Brain microvascular endothelial cell (primary cell): ENCODE measurements at regions of chr1 and their contacts with region 1.

Region 1: GRCh38 chr1:17606826-17607440 is 67.4 kb downstream of the ARHGEF10L start:
- DNase-seq: peak; percentile 47
- H3K4me3 ChIP-seq: no peak overlapping the region
- H3K27ac ChIP-seq: no peak overlapping the region
- H3K27me3 ChIP-seq: no peaks in the 10 kb centered on the region
- CTCF ChIP-seq: peak; percentile 96

Region 2: GRCh38 chr1:17494114-17494729 is 112.7 kb before region 1 on chr1:
- in situ Hi-C with region 1: loop called (anchors 10 kb)
- DNase-seq: peak; percentile 52
- H3K4me3 ChIP-seq: no peak overlapping the region
- H3K27ac ChIP-seq: no peak overlapping the region
- H3K27me3 ChIP-seq: no peaks in the 10 kb centered on the region
- CTCF ChIP-seq: peak; percentile 97

Region 3: DNA sequence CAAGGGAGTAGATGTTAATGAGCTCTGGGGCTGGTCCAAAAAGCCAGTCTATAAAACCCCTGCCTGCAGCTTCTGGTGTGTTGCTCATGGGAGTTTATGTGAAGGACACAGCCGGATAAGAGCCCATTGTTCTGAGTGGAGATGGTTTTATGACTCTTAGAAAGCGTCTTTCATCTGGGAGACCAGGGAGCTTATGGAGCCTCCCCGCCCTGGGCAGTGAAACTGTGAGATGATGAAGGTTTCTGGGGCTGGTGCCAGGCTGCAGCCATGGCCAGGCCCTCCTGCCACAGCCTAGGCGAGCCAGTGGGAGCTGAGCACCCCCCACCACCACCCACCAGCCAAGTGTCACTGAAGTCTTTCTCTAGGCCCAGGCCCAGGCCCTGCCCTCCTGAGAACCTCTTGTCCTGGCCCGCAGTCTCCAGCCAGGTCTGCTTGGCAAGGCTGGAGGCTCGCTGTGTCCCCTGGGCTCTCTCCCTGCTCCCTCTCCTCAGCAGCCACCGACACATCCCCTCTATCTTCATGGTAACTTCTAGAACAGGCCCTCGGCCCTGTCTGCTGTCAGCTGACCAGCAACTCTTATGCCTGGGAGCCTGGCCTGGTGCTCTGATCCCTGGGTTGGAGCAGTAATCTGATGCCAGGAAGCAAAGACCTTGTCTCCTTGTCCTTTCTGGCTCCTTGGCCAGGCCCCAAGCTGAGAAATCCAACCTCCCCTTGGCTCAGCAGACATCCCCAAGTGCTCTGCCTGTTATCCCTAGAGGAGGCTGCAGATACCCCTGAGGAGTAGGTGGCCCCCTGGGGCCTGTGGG is 75.0 kb before region 1 on chr1:
- in situ Hi-C with region 1: no loop called
- DNase-seq: no peak
- H3K4me3 ChIP-seq: no peak overlapping the region
- H3K27ac ChIP-seq: no peak overlapping the region
- H3K27me3 ChIP-seq: no peaks in the 10 kb centered on the region
- CTCF ChIP-seq: no peak